ENCODE measurements at regions of chr7 and their contacts with region 1.

Region 1: DNA sequence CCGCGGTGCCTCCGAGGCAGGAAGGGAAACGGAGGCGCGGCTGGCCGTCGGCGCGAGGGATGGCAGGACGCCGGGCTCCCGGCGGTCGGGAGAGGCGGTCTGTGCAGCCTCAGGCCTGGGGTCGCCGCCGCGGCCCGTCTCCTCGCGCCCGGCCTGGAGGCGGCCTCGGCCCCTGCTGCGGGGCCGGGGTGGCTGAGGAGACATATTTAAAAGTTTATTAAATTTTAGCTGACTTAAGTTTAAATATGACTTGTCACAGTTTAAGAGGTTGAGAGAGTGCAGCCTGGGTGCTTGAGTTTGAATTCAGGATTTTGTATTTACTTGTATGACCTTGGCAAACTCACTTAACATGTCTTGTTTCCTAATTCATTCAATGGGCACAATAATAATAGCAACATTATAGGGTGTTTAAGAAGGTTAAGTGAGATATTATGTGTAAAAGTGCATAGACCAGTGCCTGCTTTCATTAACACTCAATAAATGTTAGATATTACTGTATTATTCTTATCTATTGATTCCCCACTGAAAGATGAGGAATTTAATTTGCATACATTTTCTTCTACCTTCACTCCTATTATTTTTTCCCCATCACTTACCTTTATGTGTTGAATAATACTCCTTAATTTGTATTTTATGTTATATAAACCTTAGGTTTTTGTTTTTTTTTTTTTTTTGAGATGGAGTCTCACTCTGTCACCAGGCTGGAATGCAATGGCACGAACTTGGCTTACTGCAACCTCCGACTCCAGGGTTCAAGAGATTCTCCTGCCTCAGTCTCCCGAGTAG is 718 bp downstream of the DYNC2I1 start:
- DNase-seq: no peak
- H3K4me3 ChIP-seq: peak overlapping the region; percentile 55 to 72 (median 66)
- H3K27ac ChIP-seq: peak overlapping the region; percentile 86
- H3K4me1 ChIP-seq: peaks cover 14% of the 10 kb centered on the region
- H3K27me3 ChIP-seq: no peaks in the 10 kb centered on the region
- CTCF ChIP-seq: no peak

Region 2: DNA sequence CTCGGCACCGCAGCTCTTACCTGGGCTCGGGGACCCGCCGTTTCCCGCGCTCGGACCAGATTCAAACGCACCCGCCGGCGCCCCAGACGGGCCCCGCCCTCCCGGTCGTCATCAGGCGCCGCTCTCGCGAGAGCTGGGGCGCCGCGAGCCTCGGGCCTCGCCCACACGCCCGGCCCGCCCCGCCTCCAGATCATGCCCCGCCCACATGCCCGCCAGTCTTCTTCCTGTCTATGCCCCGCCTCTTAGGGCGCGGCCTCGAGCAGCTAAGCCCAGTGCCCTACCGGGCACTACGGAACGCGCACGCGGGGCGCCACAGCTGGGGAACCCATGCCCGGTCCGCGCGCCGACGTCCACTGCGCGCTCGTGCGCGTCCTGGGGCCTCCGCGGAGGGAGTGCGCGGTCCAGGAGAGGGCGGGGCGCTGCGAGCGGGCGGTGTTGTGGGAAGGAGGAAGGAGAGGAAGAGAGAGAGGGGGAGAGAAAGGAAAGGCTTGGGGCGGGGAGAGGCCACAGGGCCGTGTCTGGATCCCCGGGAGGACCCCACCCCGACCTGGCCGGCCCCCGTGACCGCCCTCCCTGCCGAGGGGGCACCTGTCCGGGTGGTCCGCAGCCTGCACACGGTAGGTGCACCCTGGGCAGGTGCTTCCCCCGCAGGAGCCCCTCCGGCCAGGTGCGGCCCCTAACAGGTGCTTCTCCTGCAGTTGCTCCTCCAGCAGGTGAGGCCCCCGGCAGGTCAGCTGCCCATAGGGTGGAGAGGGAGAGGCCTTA is 152.2 kb before region 1 on chr7 and contains the start of gene NCAPG2:
- CTCF ChIA-PET with region 1: no interaction called
- dilution Hi-C with region 1: no loop called
- in situ Hi-C with region 1: no loop called
- intact Hi-C with region 1: loop called (anchors 1 kb)
- DNase-seq: peak; percentile 98
- H3K4me3 ChIP-seq: peak within 1 kb of the TSS; percentile 80 to 100 (median 90)
- H3K27ac ChIP-seq: peak within 1 kb of the TSS; percentile 85
- H3K4me1 ChIP-seq: peaks cover 16% of the 10 kb centered on the region
- H3K27me3 ChIP-seq: no peaks in the 10 kb centered on the region
- CTCF ChIP-seq: peak in 1 of 2 donors; percentile 36
- total RNA-seq, gene NCAPG2: 3.2 to 42.0 TPM

Region 3: GRCh38 chr7:158818325-158819213 is 38.5 kb before region 1 on chr7:
- CTCF ChIA-PET with region 1: no interaction called
- dilution Hi-C with region 1: no loop called
- in situ Hi-C with region 1: no loop called
- intact Hi-C with region 1: loop called (anchors 2 kb)
- DNase-seq: peak; percentile 99
- H3K4me3 ChIP-seq: peak overlapping the region; percentile 35 to 55 (median 53)
- H3K27ac ChIP-seq: peak overlapping the region; percentile 100
- H3K4me1 ChIP-seq: peaks cover 63% of the 10 kb centered on the region
- H3K27me3 ChIP-seq: no peaks in the 10 kb centered on the region
- CTCF ChIP-seq: peak in 1 of 2 donors; percentile 14